ENCODE measurements at regions of chr11 and their contacts with region 1.

Region 1: GRCh38 chr11:67082035-67082791 is 25.6 kb downstream of the RHOD start:
- DNase-seq: no peak

Region 2: DNA sequence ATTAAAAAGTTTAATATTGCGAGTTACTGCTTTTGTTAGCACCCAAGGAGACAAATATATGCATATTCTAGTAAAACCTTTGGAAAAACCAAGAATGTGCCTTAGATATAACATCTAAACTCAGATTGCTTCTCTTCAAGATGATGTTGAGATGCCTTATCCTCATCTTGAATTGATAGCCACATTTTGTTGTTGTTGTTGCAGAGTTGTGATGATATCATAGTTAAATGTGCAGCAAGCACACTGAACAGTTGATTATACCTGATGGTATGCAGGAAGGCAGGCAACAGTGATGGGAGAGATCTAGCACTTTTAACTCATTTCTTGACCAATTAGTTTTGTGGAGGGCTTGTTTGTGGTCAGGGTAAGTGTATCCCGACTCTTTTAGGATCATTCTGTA is 84.9 kb after region 1 on chr11:
- intact Hi-C with region 1: loop called (anchors 5 kb)
- DNase-seq: no peak